HepG2 (cell line): ENCODE measurements at regions of chr5 and their contacts with region 1.

Region 1: DNA sequence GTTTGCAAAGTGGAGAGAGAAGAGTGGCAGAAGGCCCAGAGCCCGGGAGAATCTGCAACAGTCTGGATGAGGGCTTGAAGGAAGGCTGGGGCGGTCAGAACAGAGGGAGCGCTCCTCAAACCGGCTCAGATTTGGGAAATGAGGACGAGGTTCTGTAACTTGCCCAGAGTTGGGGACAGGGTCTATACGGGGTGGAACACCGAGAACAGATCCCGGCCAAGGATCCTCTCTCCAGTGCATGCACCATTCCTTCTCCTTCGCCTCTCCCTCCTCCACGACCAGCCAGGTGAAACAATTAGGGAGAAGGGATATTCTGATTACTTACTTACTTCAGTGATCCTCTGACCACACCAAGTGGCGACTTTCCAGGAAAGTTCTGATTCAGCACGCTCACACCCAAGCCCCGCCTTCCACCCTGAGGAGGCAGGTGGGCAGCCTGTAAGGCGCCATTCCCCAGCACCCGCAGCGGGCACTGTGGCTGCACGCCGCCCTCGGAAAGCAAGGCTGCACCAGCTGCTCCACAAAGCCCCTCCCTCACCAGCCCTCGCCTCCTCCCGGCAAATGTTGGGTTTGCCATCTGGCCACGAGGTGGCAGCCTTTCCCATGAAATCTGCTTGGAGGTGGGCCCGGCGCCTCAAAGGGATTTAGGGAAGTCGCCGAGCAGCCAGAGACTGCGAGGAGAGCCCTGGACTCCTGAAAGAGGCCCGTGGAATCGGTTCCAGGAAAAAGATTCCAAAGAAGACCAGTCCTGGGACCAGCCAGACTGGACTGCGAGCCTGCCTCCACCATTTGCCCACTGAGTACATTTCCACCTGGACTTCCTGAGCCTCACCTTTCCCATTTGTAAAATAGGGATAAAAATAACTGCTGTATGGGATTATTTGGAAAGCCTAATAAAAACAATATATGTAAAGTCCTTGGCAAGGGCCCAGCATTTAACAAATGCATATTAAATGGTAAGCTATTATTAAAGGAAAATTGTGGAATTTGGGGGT is 22.2 kb upstream of the WWC1 start:
- DNase-seq: peak; percentile 80
- ATAC-seq: peak; percentile 94
- H3K4me3 ChIP-seq: peak overlapping the region; percentile 43 to 64 (median 46)
- H3K27ac ChIP-seq: no peak overlapping the region
- H3K4me1 ChIP-seq: peaks cover 23% of the 10 kb centered on the region
- H3K27me3 ChIP-seq: peaks cover 0 to 4% of the 10 kb centered on the region in 2 experiments; a peak in 4 of 5 replicates
- CTCF ChIP-seq: peak; percentile 99
- EP300 ChIP-seq: no peak
- POLR2A ChIP-seq: no peak
- RAD21 ChIP-seq: peak; percentile 98

Region 2: DNA sequence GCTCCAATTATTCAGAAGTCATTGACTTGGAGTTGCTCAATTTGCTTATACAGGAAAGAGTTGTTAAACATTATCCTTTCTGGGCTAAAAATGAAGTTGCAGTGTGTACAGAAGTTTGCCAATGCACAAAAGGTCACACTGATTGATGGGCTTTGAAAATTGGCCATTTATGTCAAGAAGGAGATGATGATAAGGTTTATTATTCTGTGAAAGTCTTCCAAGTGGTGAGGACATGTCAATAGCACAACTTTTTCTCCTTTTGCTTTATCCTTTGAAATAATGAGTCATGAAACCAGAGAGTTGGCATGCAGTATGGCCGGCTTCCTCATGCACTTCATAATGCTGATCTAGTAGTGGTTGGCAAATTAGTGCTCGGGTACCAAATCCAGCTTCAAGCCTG is 826.3 kb before region 1 on chr5:
- CTCF ChIA-PET with region 1: no interaction called
- POLR2A ChIA-PET with region 1: no interaction called
- in situ Hi-C with region 1: no loop called
- intact Hi-C with region 1: no loop called
- DNase-seq: no peak
- ATAC-seq: no peak
- H3K4me3 ChIP-seq: no peak overlapping the region
- H3K27ac ChIP-seq: no peak overlapping the region
- H3K4me1 ChIP-seq: no peaks in the 10 kb centered on the region
- H3K27me3 ChIP-seq: no peaks in the 10 kb centered on the region
- CTCF ChIP-seq: no peak
- EP300 ChIP-seq: no peak
- POLR2A ChIP-seq: no peak
- RAD21 ChIP-seq: no peak

Region 3: DNA sequence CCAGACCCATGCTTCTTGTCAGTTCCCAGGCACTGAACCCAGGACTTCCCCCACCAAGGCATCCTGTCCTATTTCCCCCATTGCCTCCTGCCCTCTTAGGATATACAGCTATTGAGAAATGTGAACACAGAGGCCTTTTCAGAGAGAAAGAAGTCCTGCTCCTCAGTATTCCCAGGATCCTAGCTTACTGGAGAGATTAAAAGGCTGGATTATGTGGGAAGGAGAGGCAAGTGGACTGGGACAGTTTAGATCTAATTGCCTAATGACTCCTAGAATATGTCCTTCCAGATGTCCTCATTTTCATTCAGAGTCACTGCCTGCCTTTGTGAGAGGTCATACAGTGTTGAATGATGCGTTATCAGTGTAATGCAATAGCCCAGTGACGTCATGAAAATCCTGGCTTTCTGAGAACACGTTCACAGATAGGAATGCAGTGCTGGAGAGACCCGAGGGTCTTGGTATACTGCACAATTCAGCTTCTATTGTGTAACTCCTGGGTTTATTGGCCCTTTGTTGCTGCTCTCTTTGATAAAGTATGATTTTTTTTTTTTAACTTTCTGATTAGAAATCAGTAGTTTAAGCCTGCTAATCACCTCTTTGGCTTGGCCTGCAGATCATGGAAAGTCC is 48.4 kb after region 1 on chr5:
- CTCF ChIA-PET with region 1: no interaction called
- POLR2A ChIA-PET with region 1: no interaction called
- in situ Hi-C with region 1: no loop called
- intact Hi-C with region 1: loop called (anchors 2 kb)
- DNase-seq: peak; percentile 92
- ATAC-seq: no peak
- H3K4me3 ChIP-seq: no peak overlapping the region
- H3K27ac ChIP-seq: peak overlapping the region; percentile 41
- H3K4me1 ChIP-seq: peaks cover 60% of the 10 kb centered on the region
- H3K27me3 ChIP-seq: no peaks in the 10 kb centered on the region
- CTCF ChIP-seq: no peak
- EP300 ChIP-seq: 0 out of 4 replicates have a peak, but pooled peaks of 1 of the 2 experiments have one; percentile 30
- POLR2A ChIP-seq: no peak
- RAD21 ChIP-seq: no peak

Region 4: DNA sequence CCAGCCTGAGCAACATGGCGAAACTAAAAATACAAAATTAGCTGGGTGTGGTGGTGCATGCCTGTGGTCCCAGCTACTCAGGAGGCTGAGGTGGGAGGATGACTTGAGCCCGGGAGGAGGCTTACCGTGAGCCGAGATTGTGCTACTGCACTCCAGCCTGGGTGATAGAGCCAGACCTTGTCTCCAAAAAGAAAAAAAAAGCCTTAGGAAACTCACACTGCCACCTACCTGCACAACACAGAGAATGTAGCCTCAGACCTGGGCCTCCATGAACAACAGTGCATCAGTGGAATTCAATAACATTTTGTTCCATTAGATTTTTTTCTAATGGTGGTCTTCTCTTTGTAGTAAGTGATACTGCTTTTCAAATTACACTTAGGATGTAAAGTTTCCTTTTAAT is 153.2 kb after region 1 on chr5:
- CTCF ChIA-PET with region 1: interaction called, 16 read pairs
- POLR2A ChIA-PET with region 1: no interaction called
- in situ Hi-C with region 1: loop called (anchors 5 kb)
- intact Hi-C with region 1: loop called (anchors 1 kb)
- DNase-seq: peak; percentile 30
- ATAC-seq: peak; percentile 72
- H3K4me3 ChIP-seq: no peak overlapping the region
- H3K27ac ChIP-seq: no peak overlapping the region
- H3K4me1 ChIP-seq: peaks cover 25% of the 10 kb centered on the region
- H3K27me3 ChIP-seq: no peaks in the 10 kb centered on the region
- CTCF ChIP-seq: peak; percentile 55
- EP300 ChIP-seq: no peak
- POLR2A ChIP-seq: no peak
- RAD21 ChIP-seq: peak; percentile 16; the same call in 1 of the 2 replicates

Region 5: GRCh38 chr5:168434746-168435321 is 165.6 kb after region 1 on chr5:
- CTCF ChIA-PET with region 1: no interaction called
- POLR2A ChIA-PET with region 1: no interaction called
- in situ Hi-C with region 1: no loop called
- intact Hi-C with region 1: loop called (anchors 5 kb)
- DNase-seq: no peak
- ATAC-seq: no peak
- H3K4me3 ChIP-seq: no peak overlapping the region
- H3K27ac ChIP-seq: no peak overlapping the region
- H3K4me1 ChIP-seq: no peaks in the 10 kb centered on the region
- H3K27me3 ChIP-seq: no peaks in the 10 kb centered on the region
- CTCF ChIP-seq: no peak
- EP300 ChIP-seq: no peak
- POLR2A ChIP-seq: no peak
- RAD21 ChIP-seq: no peak

Region 6: GRCh38 chr5:168486136-168486879 is 217.1 kb after region 1 on chr5 and contains the start of gene RARS1:
- CTCF ChIA-PET with region 1: interaction called, 6 read pairs
- POLR2A ChIA-PET with region 1: no interaction called
- in situ Hi-C with region 1: loop called (anchors 10 kb)
- intact Hi-C with region 1: loop called (anchors 1 kb)
- DNase-seq: peak; percentile 88
- ATAC-seq: peak; percentile 97
- H3K4me3 ChIP-seq: peak within 1 kb of the TSS; percentile 91 to 97 (median 95)
- H3K27ac ChIP-seq: peak within 1 kb of the TSS; percentile 36
- H3K4me1 ChIP-seq: peaks cover 35% of the 10 kb centered on the region
- H3K27me3 ChIP-seq: no peaks in the 10 kb centered on the region; a peak in 1 of 5 replicates
- CTCF ChIP-seq: peak; percentile 99
- EP300 ChIP-seq: no peak
- POLR2A ChIP-seq: peak; percentile 95 to 99
- RAD21 ChIP-seq: peak; percentile 81
- total RNA-seq, gene RARS1: 170 and 234 TPM in 2 replicates

Region 7: DNA sequence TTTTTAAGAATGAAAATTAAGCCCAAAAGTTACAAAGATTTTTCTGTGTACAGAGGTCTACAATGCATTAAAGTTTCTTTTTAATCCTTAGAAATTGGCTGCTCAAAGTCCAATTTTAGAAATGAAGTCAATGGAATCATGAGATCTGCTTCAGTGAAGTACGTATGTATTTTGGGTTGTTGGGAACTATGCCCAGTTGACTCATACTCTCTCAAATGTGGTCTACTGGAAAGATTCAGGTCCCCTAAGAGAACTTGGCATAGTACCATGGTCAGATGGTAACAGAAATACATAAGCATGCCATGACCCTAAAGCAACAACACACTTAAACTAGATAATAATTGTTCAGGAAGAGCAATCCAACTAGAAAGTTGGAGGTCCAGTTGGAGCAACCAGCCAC is 282.9 kb after region 1 on chr5:
- CTCF ChIA-PET with region 1: no interaction called
- POLR2A ChIA-PET with region 1: no interaction called
- in situ Hi-C with region 1: no loop called
- intact Hi-C with region 1: no loop called
- DNase-seq: no peak
- ATAC-seq: no peak
- H3K4me3 ChIP-seq: no peak overlapping the region
- H3K27ac ChIP-seq: no peak overlapping the region
- H3K4me1 ChIP-seq: no peaks in the 10 kb centered on the region
- H3K27me3 ChIP-seq: no peaks in the 10 kb centered on the region
- CTCF ChIP-seq: no peak
- EP300 ChIP-seq: no peak
- POLR2A ChIP-seq: no peak
- RAD21 ChIP-seq: no peak

Region 8: GRCh38 chr5:168679515-168679920 is 410.3 kb after region 1 on chr5:
- CTCF ChIA-PET with region 1: no interaction called
- POLR2A ChIA-PET with region 1: no interaction called
- in situ Hi-C with region 1: loop called (anchors 25 kb)
- intact Hi-C with region 1: no loop called
- DNase-seq: peak; percentile 56
- ATAC-seq: peak; percentile 69
- H3K4me3 ChIP-seq: no peak overlapping the region
- H3K27ac ChIP-seq: no peak overlapping the region
- H3K4me1 ChIP-seq: peaks cover 23% of the 10 kb centered on the region
- H3K27me3 ChIP-seq: peaks cover 0 to 9% of the 10 kb centered on the region in 2 experiments; a peak in 2 of 5 replicates
- CTCF ChIP-seq: peak; percentile 86
- EP300 ChIP-seq: no peak
- POLR2A ChIP-seq: no peak
- RAD21 ChIP-seq: peak; percentile 73